Right lobe of liver (tissue), 6 donors: ENCODE measurements at regions of chr7 and their contacts with region 1.

Region 1: GRCh38 chr7:70678621-70679251 is 453.2 kb upstream of the GALNT17 start:
- DNase-seq: no peak
- ATAC-seq: no peak
- H3K4me3 ChIP-seq: no peak overlapping the region
- H3K27ac ChIP-seq: no peak overlapping the region
- H3K4me1 ChIP-seq: peaks cover 0 to 8% (median 0%) of the 10 kb centered on the region in 4 donors
- H3K27me3 ChIP-seq: no peaks in the 10 kb centered on the region
- CTCF ChIP-seq: no peak
- POLR2A ChIP-seq: no peak

Region 2: DNA sequence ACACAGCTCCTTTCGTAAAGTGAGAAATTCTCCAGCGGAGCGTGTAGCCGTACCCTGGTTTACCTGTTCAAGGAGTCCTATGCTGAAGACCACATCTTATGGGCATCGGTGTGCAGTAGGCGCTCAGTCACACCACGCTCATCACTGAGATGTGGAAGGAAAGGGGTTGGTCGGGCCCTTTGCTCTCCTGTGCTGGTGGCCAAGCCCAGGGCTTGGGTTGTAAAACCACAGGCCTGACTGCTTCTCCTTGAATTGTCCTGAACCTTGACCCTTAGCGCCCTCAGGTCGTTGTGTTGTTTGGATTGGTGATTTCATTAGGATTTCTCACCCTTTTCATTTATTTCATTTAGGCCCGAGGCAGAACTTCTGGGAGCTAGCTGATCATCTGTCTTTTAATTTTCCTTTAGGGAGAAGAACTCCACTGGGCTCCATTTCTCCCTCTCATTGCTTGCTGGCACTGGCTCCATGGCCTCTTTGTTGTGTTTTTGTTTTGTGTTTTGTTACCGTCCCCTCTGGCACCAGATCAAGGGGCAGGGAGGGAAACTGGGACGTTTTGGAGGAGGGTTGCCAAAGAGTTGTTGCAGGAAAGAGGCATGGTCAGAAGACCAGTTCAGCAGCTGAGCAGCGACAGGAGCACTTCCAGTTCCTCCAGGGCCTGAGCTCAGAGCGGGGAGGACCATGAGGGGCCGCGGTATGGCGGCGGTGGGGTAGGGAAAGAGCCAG is 58.2 kb before region 1 on chr7:
- intact Hi-C with region 1: loop called in 1 of 2 experiments (anchors 10 kb)
- DNase-seq: no peak
- ATAC-seq: peak; percentile 62 to 73 (median 64)
- H3K4me3 ChIP-seq: no peak overlapping the region
- H3K27ac ChIP-seq: no peak overlapping the region
- H3K4me1 ChIP-seq: peaks cover 0 to 18% (median 6%) of the 10 kb centered on the region in 4 donors
- H3K27me3 ChIP-seq: no peaks in the 10 kb centered on the region
- CTCF ChIP-seq: no peak
- POLR2A ChIP-seq: no peak

Region 3: DNA sequence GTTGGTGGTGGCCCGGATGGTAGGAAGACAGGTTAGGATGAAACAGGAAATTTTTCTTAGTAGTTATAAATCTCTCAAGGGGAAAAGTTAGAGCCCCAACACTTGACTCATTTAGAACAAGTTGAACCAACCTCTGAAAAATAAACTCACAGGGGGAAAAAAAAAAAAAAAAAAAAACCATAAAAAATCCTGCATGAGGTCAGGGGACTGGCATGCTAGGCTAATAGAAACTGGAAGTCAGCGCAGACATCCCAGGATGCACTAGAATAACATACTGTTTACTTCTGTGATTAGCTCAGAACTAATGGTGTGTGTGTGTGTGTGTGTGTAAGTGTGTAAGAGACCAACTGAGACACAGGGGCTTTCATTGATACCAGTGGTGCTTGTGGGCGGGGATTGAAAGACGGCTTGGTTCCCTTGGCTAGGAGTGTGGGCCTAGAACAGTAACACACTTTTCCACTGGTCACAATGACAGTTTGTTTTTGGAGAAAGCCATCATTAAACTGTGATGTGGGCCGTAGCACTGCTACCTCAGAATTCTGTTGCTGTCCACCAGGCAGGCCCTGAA is 38.4 kb before region 1 on chr7:
- intact Hi-C with region 1: no loop called
- DNase-seq: no peak
- ATAC-seq: peak in 1 of 4 donors; percentile 31
- H3K4me3 ChIP-seq: no peak overlapping the region
- H3K27ac ChIP-seq: no peak overlapping the region
- H3K4me1 ChIP-seq: peaks cover 0 to 4% (median 2%) of the 10 kb centered on the region in 4 donors
- H3K27me3 ChIP-seq: no peaks in the 10 kb centered on the region
- CTCF ChIP-seq: no peak
- POLR2A ChIP-seq: no peak

Region 4: GRCh38 chr7:71527213-71527612 is 848.5 kb after region 1 on chr7:
- intact Hi-C with region 1: no loop called
- DNase-seq: no peak
- ATAC-seq: no peak
- H3K4me3 ChIP-seq: no peak overlapping the region
- H3K27ac ChIP-seq: no peak overlapping the region
- H3K4me1 ChIP-seq: no peaks in the 10 kb centered on the region
- H3K27me3 ChIP-seq: no peaks in the 10 kb centered on the region
- CTCF ChIP-seq: no peak
- POLR2A ChIP-seq: no peak